ENCODE measurements at regions of chr2 and their contacts with region 1.

Region 1: GRCh38 chr2:165401285-165401852 is 68.1 kb upstream of the CSRNP3 start:
- DNase-seq: peak; percentile 13
- H3K4me3 ChIP-seq: no peak overlapping the region
- H3K27ac ChIP-seq: no peak overlapping the region
- H3K4me1 ChIP-seq: peaks cover 5% of the 10 kb centered on the region
- H3K27me3 ChIP-seq: no peaks in the 10 kb centered on the region
- CTCF ChIP-seq: peak; percentile 46 to 60 (median 57)

Region 2: DNA sequence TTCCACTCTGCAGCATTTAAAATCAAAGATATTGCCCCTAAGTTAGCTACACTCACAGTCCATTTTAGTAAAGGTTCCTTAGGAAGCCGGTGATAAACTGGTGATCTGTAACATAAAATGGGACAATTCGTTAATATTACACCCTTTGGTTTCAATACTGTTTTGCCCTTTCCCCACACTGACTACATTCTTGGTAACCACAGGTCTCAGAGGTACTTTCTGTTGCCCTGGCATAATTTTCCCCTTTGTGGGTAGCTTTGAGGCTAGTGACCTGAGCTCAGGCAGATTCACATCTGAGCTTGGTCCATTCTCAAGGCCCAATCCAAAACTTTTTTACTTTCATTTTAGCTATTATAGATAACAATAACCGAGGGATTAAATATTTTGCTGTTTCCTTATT is 35.2 kb after region 1 on chr2:
- dilution Hi-C with region 1: no loop called
- DNase-seq: no peak
- H3K4me3 ChIP-seq: no peak overlapping the region
- H3K27ac ChIP-seq: no peak overlapping the region
- H3K4me1 ChIP-seq: no peaks in the 10 kb centered on the region
- H3K27me3 ChIP-seq: no peaks in the 10 kb centered on the region
- CTCF ChIP-seq: no peak

Region 3: GRCh38 chr2:165474619-165475276 is 73.4 kb after region 1 on chr2:
- dilution Hi-C with region 1: no loop called
- DNase-seq: no peak
- H3K4me3 ChIP-seq: no peak overlapping the region
- H3K27ac ChIP-seq: no peak overlapping the region
- H3K4me1 ChIP-seq: no peaks in the 10 kb centered on the region
- H3K27me3 ChIP-seq: no peaks in the 10 kb centered on the region
- CTCF ChIP-seq: no peak

Region 4: GRCh38 chr2:165698444-165698894 is 297.1 kb after region 1 on chr2:
- dilution Hi-C with region 1: loop called (anchors 25 kb)
- DNase-seq: no peak
- H3K4me3 ChIP-seq: no peak overlapping the region
- H3K27ac ChIP-seq: no peak overlapping the region
- H3K4me1 ChIP-seq: no peaks in the 10 kb centered on the region
- H3K27me3 ChIP-seq: no peaks in the 10 kb centered on the region
- CTCF ChIP-seq: peak; percentile 48 to 69 (median 54)

Measured in keratinocyte (primary cell).